Activated CD4-positive, alpha-beta memory T cell treated with anti-CD3 and anti-CD28 coated beads for 36 hours (primary cell): ENCODE measurements at regions of chr12 and their contacts with region 1.

Region 1: GRCh38 chr12:80269803-80270552 is 170.6 kb downstream of the OTOGL start:
- DNase-seq: no peak
- H3K4me3 Mint-ChIP-seq: no peak overlapping the region
- H3K27ac Mint-ChIP-seq: no peak overlapping the region
- H3K4me1 Mint-ChIP-seq: no peaks in the 10 kb centered on the region
- H3K27me3 Mint-ChIP-seq: peaks cover 3% of the 10 kb centered on the region

Region 2: GRCh38 chr12:79547735-79548609 is 722.0 kb before region 1 on chr12:
- CTCF ChIA-PET with region 1: interaction called, 3 read pairs
- POLR2A ChIA-PET with region 1: no interaction called
- intact Hi-C with region 1: loop called (anchors 1 kb)
- DNase-seq: peak; percentile 11
- H3K4me3 Mint-ChIP-seq: no peak overlapping the region
- H3K27ac Mint-ChIP-seq: no peak overlapping the region
- H3K4me1 Mint-ChIP-seq: no peaks in the 10 kb centered on the region
- H3K27me3 Mint-ChIP-seq: no peaks in the 10 kb centered on the region

Region 3: DNA sequence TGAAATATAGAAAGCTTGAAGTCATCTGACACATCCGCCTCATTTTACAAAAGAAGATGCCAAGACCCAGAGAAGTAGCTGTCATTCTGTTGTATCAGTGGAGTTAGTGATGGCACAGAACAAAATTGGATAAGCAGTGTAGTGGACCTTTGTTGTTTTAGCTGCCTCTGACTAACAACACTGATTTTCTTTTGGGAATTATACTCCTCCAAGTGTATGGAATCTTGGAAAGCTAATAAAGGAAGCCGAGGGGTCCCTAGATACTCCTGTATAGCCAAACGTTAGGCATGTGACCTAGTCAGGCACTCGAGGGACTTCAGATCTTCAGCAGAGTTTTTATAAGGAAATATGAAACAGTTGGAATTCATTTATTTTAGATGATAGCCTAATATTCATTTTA is 76.1 kb before region 1 on chr12:
- CTCF ChIA-PET with region 1: interaction called, 9 read pairs
- POLR2A ChIA-PET with region 1: no interaction called
- intact Hi-C with region 1: loop called (anchors 1 kb)
- DNase-seq: no peak
- H3K4me3 Mint-ChIP-seq: no peak overlapping the region
- H3K27ac Mint-ChIP-seq: no peak overlapping the region
- H3K4me1 Mint-ChIP-seq: no peaks in the 10 kb centered on the region
- H3K27me3 Mint-ChIP-seq: peaks cover 9% of the 10 kb centered on the region

Region 4: GRCh38 chr12:80257920-80258319 is 12.1 kb before region 1 on chr12:
- CTCF ChIA-PET with region 1: interaction called, 11 read pairs
- POLR2A ChIA-PET with region 1: no interaction called
- intact Hi-C with region 1: no loop called
- DNase-seq: no peak
- H3K4me3 Mint-ChIP-seq: no peak overlapping the region
- H3K27ac Mint-ChIP-seq: no peak overlapping the region
- H3K4me1 Mint-ChIP-seq: no peaks in the 10 kb centered on the region
- H3K27me3 Mint-ChIP-seq: peaks cover 4% of the 10 kb centered on the region